ENCODE measurements at regions of chr7 and their contacts with region 1.

Region 1: DNA sequence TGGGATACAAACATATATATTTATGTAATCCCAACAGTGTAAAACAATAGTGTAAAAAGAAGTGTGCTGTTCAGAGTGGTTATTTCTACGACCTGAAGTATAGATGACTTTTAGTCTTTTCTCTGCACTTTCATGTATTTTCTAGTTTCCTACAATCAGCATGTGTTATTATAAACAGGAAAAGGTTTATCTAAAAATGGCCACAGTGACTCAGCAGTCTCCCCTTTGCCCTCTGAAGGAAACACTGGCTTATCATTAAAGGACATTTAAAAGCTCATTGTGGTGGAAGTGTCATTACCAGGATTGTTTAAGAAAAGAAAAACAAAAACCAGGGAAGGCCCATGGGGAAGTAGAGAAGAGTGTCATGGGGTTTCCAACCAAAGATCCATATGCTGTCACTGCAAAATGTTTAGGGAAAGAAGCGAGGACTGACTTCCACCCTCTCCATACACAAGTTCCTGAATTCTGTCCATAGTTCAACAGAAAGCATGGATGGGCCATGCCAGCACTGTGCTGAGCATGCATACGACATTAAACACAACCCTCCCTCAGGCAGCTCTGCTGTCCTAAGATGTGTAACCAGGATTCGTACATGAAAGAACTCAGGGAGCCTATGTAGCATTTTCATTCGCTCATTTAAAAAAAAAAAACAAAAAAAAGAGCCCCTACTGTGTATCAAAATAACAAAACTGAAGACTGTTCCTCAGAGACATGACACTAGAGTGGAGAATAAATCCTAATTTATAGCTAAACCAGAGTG is 10.2 kb downstream of the CYREN start:
- DNase-seq: peak; percentile 95
- H3K4me3 ChIP-seq: peak overlapping the region in 1 of 3 experiments; percentile 23
- H3K27ac ChIP-seq: peak overlapping the region; percentile 68
- H3K4me1 ChIP-seq: peaks cover 33% of the 10 kb centered on the region
- H3K27me3 ChIP-seq: no peaks in the 10 kb centered on the region
- CTCF ChIP-seq: no peak
- POLR2A ChIP-seq: peak; percentile 16

Region 2: GRCh38 chr7:135098391-135098790 is 61.9 kb before region 1 on chr7:
- CTCF ChIA-PET with region 1: no interaction called
- POLR2A ChIA-PET with region 1: no interaction called
- dilution Hi-C with region 1: no loop called
- intact Hi-C with region 1: loop called (anchors 5 kb)
- DNase-seq: peak; percentile 95
- H3K4me3 ChIP-seq: no peak overlapping the region
- H3K27ac ChIP-seq: peak overlapping the region; percentile 22
- H3K4me1 ChIP-seq: peaks cover 9% of the 10 kb centered on the region
- H3K27me3 ChIP-seq: no peaks in the 10 kb centered on the region
- CTCF ChIP-seq: no peak
- POLR2A ChIP-seq: no peak

Region 3: GRCh38 chr7:135147899-135148721 is 12.2 kb before region 1 on chr7 and contains the start of gene TMEM140:
- CTCF ChIA-PET with region 1: interaction called, 15 read pairs
- POLR2A ChIA-PET with region 1: interaction called, 7 read pairs
- dilution Hi-C with region 1: no loop called
- intact Hi-C with region 1: loop called (anchors 1 kb)
- DNase-seq: peak; percentile 92
- H3K4me3 ChIP-seq: peak within 1 kb of the TSS; percentile 18 to 57 (median 46)
- H3K27ac ChIP-seq: peak within 1 kb of the TSS; percentile 81
- H3K4me1 ChIP-seq: peaks cover 52% of the 10 kb centered on the region
- H3K27me3 ChIP-seq: no peaks in the 10 kb centered on the region
- CTCF ChIP-seq: no peak
- POLR2A ChIP-seq: no peak
- total RNA-seq, gene TMEM140: 15.7 and 26.5 TPM in 2 replicates

Region 4: DNA sequence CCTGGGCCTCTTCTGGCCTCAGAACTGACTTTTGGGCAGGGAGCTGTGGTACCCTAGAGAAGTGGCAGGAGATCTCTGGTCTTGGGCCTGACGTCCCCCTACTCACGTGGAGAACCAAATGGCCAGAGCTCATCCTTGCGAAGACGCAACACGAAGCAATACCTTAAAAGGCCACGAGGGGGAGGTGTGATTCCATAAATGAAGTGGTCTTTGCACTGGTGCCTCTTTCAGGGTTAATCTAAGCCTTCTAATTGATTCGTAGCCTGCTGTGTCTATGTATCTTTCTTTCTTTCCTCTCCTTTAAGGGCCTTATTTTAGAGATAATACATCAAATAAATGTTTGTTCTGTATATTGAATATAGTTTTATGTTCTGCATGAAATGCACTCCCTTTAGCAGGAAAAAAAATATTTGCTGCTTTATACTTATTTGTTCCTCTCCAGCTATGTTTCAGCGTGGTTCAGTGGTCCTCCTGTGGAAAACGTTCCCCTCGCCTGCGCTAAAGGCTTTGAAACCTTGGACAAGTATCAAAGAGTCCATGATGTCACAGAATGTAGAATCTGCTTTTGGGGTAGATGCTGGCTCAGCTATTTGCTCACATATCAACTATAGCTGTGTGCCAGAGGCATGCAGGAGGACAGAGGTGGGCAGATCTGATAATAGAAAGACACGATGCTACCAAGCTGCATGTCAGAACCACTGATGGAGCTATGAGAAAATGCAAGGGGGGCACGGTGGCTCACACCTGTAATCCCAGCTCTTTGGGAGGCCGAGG is 114.4 kb after region 1 on chr7:
- CTCF ChIA-PET with region 1: no interaction called
- POLR2A ChIA-PET with region 1: no interaction called
- dilution Hi-C with region 1: no loop called
- intact Hi-C with region 1: no loop called
- DNase-seq: peak; percentile 81
- H3K4me3 ChIP-seq: no peak overlapping the region
- H3K27ac ChIP-seq: no peak overlapping the region
- H3K4me1 ChIP-seq: no peaks in the 10 kb centered on the region
- H3K27me3 ChIP-seq: peaks cover 0 to 2% of the 10 kb centered on the region in 2 experiments
- CTCF ChIP-seq: peak; percentile 69 to 73
- POLR2A ChIP-seq: no peak

Region 5: DNA sequence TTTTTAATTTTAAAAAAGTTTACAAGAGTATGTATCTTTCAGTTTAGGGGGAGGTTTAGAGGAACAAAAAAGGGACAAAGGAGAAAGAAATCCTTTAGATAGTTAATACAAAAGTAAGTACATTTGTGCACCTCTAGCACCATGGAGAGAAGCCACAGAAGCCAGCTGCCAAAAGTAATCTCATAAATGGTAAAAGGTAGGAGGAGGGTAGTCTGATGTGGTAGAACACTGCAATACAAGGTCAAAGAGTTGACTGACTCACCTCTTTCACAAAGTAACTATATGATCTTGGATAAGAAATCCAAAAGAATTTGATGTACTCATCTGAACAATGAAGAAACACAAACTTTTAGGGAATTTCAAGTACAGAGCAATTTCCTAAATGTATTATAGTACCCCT is 281.5 kb after region 1 on chr7:
- CTCF ChIA-PET with region 1: no interaction called
- POLR2A ChIA-PET with region 1: no interaction called
- dilution Hi-C with region 1: no loop called
- intact Hi-C with region 1: no loop called
- DNase-seq: peak; percentile 16
- H3K4me3 ChIP-seq: no peak overlapping the region
- H3K27ac ChIP-seq: no peak overlapping the region
- H3K4me1 ChIP-seq: no peaks in the 10 kb centered on the region
- H3K27me3 ChIP-seq: no peaks in the 10 kb centered on the region
- CTCF ChIP-seq: no peak
- POLR2A ChIP-seq: no peak

Measured in endothelial cell of umbilical vein (primary cell).